Colonic mucosa (tissue), 4 donors: ENCODE measurements at regions of chr15 and their contacts with region 1.

Region 1: DNA sequence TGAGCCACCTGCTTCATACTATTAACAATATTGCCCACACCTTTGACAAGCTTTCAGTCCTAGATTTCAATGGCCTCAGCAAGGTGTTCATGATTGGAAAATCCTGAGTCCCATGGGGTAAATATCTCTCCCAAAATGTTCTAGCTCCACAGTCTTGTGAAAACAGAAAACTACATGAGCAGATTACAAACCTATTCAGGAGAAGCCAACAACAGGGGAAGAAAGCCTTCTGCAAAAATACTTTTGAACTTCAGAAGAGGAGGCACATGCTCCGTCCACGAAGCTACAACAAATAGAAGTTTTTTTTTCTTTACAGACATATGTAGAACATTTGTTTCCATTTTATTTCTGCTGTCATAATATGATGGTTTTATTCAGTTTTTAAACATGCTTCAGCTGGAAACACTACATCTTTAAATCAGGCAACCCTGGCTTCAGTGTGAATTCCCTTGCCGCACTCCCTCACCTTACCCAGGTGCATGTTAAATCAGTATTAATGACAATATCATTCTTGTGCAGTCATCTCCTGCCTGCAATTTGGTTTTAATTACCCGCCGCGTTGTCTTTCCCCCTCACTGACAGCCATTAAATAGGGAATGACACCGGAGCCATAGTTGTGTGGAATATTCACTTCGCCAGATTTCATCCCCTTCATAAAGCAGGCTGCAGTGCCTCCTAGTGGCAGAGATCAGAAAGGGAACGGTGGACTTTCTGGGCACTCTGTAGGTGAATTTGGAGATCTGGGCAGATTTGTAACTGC is 725.5 kb upstream of the ARRDC4 start:
- DNase-seq: peak; percentile 41
- H3K4me3 ChIP-seq: no peak overlapping the region
- H3K27ac ChIP-seq: no peak overlapping the region
- H3K4me1 ChIP-seq: no peaks in the 10 kb centered on the region
- H3K27me3 ChIP-seq: no peaks in the 10 kb centered on the region
- CTCF ChIP-seq: peak; percentile 72

Region 2: GRCh38 chr15:95259513-95259912 is 1975.5 kb before region 1 on chr15:
- intact Hi-C with region 1: loop called (anchors 5 kb)
- DNase-seq: peak; percentile 65
- H3K4me3 ChIP-seq: no peak overlapping the region
- H3K27ac ChIP-seq: no peak overlapping the region
- H3K4me1 ChIP-seq: no peaks in the 10 kb centered on the region
- H3K27me3 ChIP-seq: no peaks in the 10 kb centered on the region
- CTCF ChIP-seq: peak; percentile 62

Region 3: GRCh38 chr15:96327155-96327741 is 907.8 kb before region 1 on chr15:
- intact Hi-C with region 1: loop called (anchors 10 kb)
- DNase-seq: peak; percentile 51
- H3K4me3 ChIP-seq: peak overlapping the region; percentile 45
- H3K27ac ChIP-seq: peak overlapping the region; percentile 65
- H3K4me1 ChIP-seq: no peaks in the 10 kb centered on the region
- H3K27me3 ChIP-seq: peaks cover 36% of the 10 kb centered on the region
- CTCF ChIP-seq: peak; percentile 57

Region 4: DNA sequence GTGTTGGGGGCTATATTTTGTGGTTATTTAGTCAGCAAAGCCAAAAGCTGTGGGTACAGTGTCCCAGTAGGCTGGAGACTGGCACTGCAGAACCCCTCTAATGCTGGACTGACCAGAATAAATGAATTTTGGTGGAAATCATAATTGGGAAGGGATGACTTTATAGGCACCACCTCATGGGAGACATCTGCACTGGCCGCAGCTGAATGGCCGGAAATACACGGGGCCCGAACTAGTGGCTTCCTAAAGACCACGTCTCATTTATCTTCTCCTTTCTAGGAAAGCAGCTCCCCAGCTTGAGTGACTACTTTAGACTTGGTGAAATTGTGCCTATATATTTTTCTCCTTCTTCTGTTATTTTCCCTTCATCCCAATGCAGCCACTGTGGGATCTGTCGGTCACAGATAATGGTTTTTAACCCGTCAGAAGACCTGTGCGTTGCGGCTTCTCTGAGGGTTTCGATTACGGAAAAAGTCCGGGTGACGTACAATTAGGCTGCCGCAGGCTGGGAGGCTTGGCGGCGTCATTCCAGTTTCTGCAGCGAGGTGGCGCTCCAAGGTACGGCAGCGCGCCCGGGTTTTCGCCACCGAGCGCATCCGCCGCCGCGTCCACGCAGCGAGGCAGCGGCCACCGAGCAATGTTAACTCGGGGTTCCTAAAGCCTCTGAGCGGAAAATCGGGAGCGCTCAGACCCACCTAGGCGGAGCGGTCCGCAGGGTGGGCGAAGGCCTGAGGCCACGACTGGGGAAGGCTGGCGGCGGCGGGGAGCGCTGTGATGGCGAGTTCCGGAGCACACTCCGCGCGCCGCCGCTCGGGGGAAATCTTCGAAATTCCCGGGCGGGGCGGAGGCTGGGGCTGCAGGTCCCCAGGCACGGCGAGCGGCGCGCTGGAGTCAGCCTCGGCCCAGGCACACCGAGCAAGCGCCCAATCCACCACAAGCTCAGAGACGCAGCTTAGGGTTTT is 878.3 kb before region 1 on chr15:
- intact Hi-C with region 1: loop called (anchors 5 kb)
- DNase-seq: peak; percentile 89
- H3K4me3 ChIP-seq: peak overlapping the region; percentile 58
- H3K27ac ChIP-seq: peak overlapping the region; percentile 20
- H3K4me1 ChIP-seq: peaks cover 4% of the 10 kb centered on the region
- H3K27me3 ChIP-seq: peaks cover 52% of the 10 kb centered on the region
- CTCF ChIP-seq: peak; percentile 99

Region 5: GRCh38 chr15:97759363-97759762 is 524.3 kb after region 1 on chr15:
- intact Hi-C with region 1: loop called (anchors 10 kb)
- DNase-seq: no peak
- H3K4me3 ChIP-seq: no peak overlapping the region
- H3K27ac ChIP-seq: no peak overlapping the region
- H3K4me1 ChIP-seq: no peaks in the 10 kb centered on the region
- H3K27me3 ChIP-seq: no peaks in the 10 kb centered on the region
- CTCF ChIP-seq: no peak